Activated CD4-positive, alpha-beta T cell treated with anti-CD3 and anti-CD28 coated beads for 36 hours (primary cell): ENCODE measurements at regions of chr2 and their contacts with region 1.

Region 1: DNA sequence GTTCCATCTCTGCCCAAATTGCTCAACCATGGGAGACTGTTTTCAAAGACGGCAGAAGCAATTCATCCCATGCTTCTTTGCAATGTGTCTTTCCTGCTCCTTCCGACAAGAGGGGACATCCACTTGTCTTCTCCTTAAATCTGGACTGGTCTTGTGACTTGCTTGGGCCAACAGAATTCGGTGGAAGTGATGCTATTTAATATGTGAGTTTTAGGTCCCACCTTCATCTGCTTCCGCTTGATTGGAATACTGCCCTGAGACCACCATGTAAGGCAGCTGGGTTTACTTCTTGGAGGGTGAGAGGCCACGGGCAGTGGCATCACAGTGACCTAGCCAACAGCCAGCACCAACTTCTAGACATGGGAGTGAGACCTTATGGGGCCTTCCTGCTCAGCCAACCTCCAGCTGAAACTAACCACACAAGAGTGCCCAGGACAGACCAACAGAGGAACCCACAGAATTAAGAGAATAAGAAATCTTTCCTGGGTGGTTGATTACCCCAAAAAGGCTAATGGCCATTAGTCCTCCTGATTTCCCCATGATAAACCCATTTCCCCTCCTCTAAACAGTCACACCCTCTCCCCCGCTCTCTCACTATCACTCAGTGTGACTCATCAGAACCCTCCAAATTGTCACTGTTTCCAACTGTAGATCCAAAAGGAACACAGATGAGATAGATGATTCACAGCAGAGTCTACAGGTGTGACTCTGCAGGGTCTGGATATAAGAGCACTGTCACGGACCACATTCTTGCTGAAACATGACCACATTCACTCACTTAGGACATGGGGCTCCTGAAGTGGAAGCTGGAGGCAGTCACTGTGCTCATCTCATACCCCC is 16.2 kb upstream of the RHOB start:
- DNase-seq: peak; percentile 59
- ATAC-seq: peak; percentile 93
- H3K4me3 Mint-ChIP-seq: no peak overlapping the region
- H3K27ac Mint-ChIP-seq: no peak overlapping the region
- H3K4me1 Mint-ChIP-seq: peaks cover 11% of the 10 kb centered on the region
- H3K27me3 Mint-ChIP-seq: peaks cover 12% of the 10 kb centered on the region

Region 2: GRCh38 chr2:20365249-20365817 is 65.3 kb before region 1 on chr2:
- CTCF ChIA-PET with region 1: no interaction called
- POLR2A ChIA-PET with region 1: no interaction called
- intact Hi-C with region 1: loop called (anchors 1 kb)
- DNase-seq: peak; percentile 80
- ATAC-seq: peak; percentile 69
- H3K4me3 Mint-ChIP-seq: peak overlapping the region; percentile 3
- H3K27ac Mint-ChIP-seq: peak overlapping the region; percentile 86
- H3K4me1 Mint-ChIP-seq: peaks cover 26% of the 10 kb centered on the region
- H3K27me3 Mint-ChIP-seq: peaks cover 13% of the 10 kb centered on the region

Region 3: DNA sequence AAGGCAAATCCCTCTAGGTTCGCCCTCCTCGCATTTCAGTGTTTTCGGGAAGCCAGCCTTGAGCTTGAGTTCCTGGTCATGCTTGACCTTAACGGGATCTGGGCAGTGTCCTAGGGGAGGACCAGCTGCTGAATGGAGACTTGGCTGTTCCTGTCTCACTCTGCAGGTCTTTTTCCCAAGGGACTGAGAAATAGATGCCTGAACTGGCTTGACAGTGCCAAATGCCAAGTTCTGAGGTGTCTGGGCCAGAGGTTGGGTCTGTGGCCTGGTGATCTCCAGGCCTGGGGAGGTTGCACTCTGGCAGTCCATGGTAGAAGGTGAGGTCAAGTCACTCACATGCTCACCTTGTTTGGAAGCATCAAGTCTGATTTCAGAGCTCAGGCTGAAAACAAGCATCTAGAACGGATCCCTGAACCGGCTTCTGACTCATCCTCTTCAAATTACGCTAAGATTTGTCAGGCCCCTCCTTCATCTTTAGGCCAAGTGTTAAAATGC is 35.8 kb after region 1 on chr2:
- CTCF ChIA-PET with region 1: no interaction called
- POLR2A ChIA-PET with region 1: no interaction called
- intact Hi-C with region 1: no loop called
- DNase-seq: no peak
- ATAC-seq: no peak
- H3K4me3 Mint-ChIP-seq: no peak overlapping the region
- H3K27ac Mint-ChIP-seq: no peak overlapping the region
- H3K4me1 Mint-ChIP-seq: no peaks in the 10 kb centered on the region
- H3K27me3 Mint-ChIP-seq: peaks cover 6% of the 10 kb centered on the region